Activated CD4-positive, alpha-beta T cell treated with anti-CD3 and anti-CD28 coated beads for 36 hours (primary cell): ENCODE measurements at regions of chr10 and their contacts with region 1.

Region 1: DNA sequence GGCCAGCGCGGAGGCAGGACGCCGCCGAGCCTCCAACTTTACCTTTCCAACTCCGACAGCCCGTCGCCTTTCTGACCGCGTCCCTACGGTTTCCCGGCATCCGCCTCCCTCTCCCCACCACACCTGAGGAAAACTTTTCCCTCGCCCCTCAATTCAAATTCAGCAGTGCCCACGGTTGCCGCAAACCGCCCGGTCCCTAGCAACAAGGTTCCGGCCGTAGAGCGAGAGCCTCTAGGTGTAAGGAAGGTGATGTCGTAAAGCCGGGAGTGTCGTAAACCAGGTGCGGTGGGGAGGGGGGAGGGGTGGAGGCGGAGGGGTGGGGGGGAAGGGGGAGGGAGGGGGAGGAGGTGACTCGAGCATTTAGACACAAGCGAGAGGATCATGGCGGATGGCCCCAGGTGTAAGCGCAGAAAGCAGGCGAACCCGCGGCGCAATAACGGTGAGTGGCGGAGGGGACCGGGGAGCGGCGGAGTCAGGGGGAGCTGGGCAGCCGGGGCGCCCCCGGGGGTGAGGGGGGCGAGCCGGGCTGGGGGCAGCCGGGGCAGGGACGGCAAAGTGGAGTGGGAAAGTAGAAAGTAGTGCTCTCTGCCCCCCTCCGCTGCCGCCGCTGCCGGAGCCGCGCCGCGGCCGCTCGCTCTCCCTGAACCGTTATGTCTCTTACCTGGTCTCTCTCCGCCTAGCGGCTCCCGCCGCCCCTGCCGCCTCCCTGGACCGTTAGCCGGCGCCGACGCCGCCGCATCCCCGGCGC is at the start of gene ZEB1:
- DNase-seq: peak; percentile 95
- ATAC-seq: peak; percentile 55
- H3K4me3 Mint-ChIP-seq: peak within 1 kb of the TSS; percentile 93
- H3K27ac Mint-ChIP-seq: peak within 1 kb of the TSS; percentile 99
- H3K4me1 Mint-ChIP-seq: peaks cover 39% of the 10 kb centered on the region
- H3K27me3 Mint-ChIP-seq: no peaks in the 10 kb centered on the region
- total RNA-seq, gene ZEB1: 32.0 to 49.0 TPM

Region 2: DNA sequence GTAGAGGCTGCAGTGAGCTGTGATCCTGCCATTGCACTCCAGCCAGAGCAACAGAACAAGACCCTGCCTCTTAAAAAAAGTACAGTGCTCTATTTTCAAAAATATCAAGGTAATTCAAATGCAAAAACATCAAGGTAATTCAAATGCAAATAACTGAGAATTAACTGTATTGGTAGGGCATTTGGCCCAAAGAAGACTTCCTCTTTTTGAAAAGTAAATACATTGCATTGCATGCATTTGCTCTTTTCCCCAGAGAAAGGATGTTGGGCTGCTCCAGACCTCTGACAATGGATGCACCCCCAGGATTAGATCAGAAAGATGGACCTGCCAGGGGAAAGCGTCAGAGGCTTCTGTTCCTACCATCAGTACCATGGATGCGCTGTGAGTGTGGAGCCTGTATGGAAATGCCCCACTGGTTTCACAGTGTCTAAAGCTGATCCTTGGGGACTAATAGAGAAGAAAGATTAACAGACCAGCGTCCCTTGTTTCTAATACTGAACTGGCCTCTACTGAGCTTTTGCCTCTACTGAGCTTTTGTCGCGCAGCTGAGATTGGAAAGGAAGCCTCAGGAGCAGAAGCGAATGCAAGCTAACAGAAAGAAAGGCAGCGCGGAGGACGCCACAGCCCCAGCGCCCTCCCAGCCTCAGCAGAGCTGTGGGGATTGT is 595.9 kb before region 1 on chr10:
- CTCF ChIA-PET with region 1: interaction called, 3 read pairs
- POLR2A ChIA-PET with region 1: no interaction called
- intact Hi-C with region 1: loop called in 1 of 2 experiments (anchors 5 kb)
- DNase-seq: no peak
- ATAC-seq: no peak
- H3K4me3 Mint-ChIP-seq: no peak overlapping the region
- H3K27ac Mint-ChIP-seq: no peak overlapping the region
- H3K4me1 Mint-ChIP-seq: peaks cover 4% of the 10 kb centered on the region
- H3K27me3 Mint-ChIP-seq: no peaks in the 10 kb centered on the region

Region 3: DNA sequence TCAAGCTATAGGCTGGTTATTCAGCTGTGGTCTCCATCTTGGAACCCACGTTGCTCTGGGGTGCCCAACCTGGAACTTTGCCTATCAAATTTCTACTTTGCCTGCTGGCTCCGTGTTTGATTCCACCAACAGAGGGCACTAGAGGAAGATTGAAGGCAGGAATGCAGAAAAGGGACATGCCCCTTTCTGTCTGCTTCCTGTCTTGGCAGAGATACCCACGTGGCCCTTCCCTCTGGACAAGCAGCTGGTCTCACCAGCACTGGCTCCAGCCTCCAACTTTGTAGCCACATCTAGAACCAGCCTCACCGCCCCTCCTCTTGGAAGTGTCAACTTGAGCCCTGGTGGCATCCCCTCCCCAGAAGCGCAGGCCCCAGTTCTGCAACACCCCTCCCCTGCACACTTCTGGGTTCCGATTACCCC is 235.3 kb before region 1 on chr10:
- CTCF ChIA-PET with region 1: no interaction called
- POLR2A ChIA-PET with region 1: no interaction called
- intact Hi-C with region 1: loop called (anchors 2 to 5 kb)
- DNase-seq: peak; percentile 80
- ATAC-seq: peak; percentile 94
- H3K4me3 Mint-ChIP-seq: no peak overlapping the region
- H3K27ac Mint-ChIP-seq: no peak overlapping the region
- H3K4me1 Mint-ChIP-seq: peaks cover 6% of the 10 kb centered on the region
- H3K27me3 Mint-ChIP-seq: no peaks in the 10 kb centered on the region

Region 4: GRCh38 chr10:31340343-31340742 is 21.3 kb after region 1 on chr10:
- CTCF ChIA-PET with region 1: interaction called, 11 read pairs
- POLR2A ChIA-PET with region 1: no interaction called
- intact Hi-C with region 1: loop called (anchors 1 kb)
- DNase-seq: peak; percentile 52
- ATAC-seq: peak; percentile 45
- H3K4me3 Mint-ChIP-seq: no peak overlapping the region
- H3K27ac Mint-ChIP-seq: no peak overlapping the region
- H3K4me1 Mint-ChIP-seq: peaks cover 22% of the 10 kb centered on the region
- H3K27me3 Mint-ChIP-seq: no peaks in the 10 kb centered on the region

Region 5: DNA sequence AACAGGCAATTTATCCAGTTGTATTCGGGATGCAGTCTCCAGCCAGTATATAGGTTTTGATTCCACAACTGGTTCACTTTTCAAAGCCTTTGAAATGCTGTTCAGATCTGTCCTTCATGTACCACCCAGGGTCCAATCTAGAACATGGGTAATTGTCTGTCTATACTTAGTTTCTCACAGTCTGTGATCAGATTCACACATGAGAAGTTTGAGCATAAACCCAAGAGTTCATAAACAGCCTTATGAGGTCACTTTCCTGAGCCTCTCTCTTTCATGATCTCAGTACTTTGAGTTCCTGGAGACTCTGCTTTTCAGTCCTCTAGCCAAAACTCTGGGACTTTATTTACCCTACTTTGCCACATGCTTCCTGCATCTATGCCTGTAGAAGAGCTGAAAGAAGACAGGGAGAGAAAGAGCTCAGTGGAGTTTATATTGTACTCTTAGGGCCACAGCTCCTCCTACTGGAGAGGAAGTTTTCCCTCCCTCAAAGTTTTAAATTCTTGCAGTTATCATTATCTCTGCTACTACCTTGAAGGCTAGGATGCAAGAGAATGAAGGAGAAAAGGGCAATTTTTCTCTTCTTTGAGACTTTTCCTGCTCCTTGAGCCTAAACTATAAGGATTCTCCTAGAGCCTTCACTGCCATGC is 172.0 kb after region 1 on chr10:
- CTCF ChIA-PET with region 1: no interaction called
- POLR2A ChIA-PET with region 1: no interaction called
- intact Hi-C with region 1: loop called (anchors 2 to 5 kb)
- DNase-seq: peak; percentile 32
- ATAC-seq: peak; percentile 51
- H3K4me3 Mint-ChIP-seq: no peak overlapping the region
- H3K27ac Mint-ChIP-seq: no peak overlapping the region
- H3K4me1 Mint-ChIP-seq: peaks cover 2% of the 10 kb centered on the region
- H3K27me3 Mint-ChIP-seq: no peaks in the 10 kb centered on the region

Region 6: DNA sequence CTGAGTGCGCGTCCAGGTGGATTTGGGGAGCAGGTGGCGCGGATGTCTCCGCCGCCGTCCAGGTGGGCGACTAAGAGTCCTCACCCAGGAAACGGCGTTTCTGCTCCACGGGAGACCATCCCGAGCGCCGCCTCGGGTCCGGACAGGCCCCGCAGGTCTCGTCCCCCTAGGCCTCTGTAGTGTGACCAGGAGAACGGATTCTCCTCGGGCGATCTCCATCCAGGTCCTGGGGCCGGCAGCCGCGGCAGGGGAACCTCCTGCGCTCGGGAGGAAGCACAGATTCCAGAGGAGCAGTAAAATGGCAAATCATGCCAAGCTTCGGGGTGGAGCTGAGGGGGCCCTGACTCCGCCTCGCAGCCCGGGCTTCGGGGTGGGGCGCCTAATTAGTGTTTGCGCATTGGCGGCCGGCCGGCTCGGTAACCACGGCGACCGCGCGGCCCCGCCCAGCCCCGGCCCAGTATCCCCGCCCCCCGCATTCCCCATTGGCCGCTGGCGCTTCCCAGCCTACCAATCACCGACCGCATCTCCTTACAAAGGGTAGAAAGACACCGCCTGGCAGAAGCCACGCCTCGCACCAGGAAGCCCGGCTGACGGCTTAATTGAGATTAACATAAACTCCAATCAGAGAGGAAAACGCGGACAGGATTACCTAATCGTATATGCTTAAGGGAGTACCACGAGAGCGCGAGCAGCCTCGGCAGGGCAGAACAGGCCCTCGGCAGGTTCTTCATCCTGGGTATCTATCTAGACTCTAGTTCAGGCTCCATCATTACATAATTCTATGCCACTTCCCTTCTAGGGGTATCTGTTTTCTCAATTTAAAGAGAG is 441.0 kb after region 1 on chr10:
- CTCF ChIA-PET with region 1: no interaction called
- POLR2A ChIA-PET with region 1: no interaction called
- intact Hi-C with region 1: loop called (anchors 1 to 10 kb)
- DNase-seq: peak; percentile 97
- ATAC-seq: peak; percentile 94
- H3K4me3 Mint-ChIP-seq: peak overlapping the region; percentile 91
- H3K27ac Mint-ChIP-seq: peak overlapping the region; percentile 94
- H3K4me1 Mint-ChIP-seq: peaks cover 15% of the 10 kb centered on the region
- H3K27me3 Mint-ChIP-seq: no peaks in the 10 kb centered on the region